Panc1 (cell line): ENCODE measurements at regions of chr12 and their contacts with region 1.

Region 1: DNA sequence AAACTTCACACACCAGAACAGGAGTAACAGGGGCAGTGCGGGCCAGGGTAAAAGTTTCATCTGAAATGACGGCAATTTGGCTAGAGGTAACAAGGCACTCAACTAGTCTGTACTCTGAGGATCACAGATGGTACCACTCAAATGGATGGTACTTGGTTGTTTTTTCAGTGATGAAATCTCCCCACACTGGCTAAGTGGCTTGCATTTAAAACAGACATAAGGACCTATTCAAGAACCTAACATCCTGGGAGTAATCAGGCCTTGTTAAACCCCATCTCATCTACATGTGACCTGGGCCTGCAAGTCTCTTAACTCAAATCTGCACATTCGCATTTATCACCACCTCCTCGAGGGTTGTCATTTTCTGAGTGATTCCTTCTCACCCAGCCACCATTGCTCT is 90.8 kb downstream of the PRKAB1 start:
- DNase-seq: no peak
- ATAC-seq: no peak
- H3K4me3 ChIP-seq: no peak overlapping the region
- H3K27ac ChIP-seq: no peak overlapping the region
- H3K4me1 ChIP-seq: no peaks in the 10 kb centered on the region
- H3K27me3 ChIP-seq: no peaks in the 10 kb centered on the region
- CTCF ChIP-seq: no peak

Region 2: DNA sequence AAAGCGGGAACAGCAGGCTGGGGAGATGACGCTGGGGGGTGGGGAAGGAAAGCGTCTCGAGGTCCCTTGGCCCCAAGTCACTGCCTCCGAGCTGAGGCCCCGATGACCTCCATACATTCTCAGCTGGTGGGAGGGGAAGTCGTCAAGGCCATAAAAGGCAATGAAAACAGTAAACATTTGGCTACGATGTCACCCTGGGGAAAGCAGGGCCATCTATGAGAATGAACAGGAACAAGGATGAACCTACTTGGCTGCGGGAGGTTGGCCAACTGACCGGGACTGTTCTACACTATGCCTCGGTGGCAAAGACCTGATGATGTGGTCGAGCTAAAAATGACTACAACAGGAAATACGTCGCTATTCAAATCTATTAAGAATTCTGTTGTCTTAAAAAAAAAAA is 71.3 kb before region 1 on chr12:
- CTCF ChIA-PET with region 1: no interaction called
- POLR2A ChIA-PET with region 1: interaction called, 14 read pairs
- in situ Hi-C with region 1: no loop called
- intact Hi-C with region 1: no loop called
- DNase-seq: no peak
- ATAC-seq: no peak
- H3K4me3 ChIP-seq: no peak overlapping the region
- H3K27ac ChIP-seq: no peak overlapping the region
- H3K4me1 ChIP-seq: no peaks in the 10 kb centered on the region
- H3K27me3 ChIP-seq: no peaks in the 10 kb centered on the region
- CTCF ChIP-seq: no peak